A673 (cell line): ENCODE measurements at regions of chr1 and their contacts with region 1.

Region 1: GRCh38 chr1:172745014-172745413 is 86.1 kb downstream of the FASLG start:
- DNase-seq: peak; percentile 70
- H3K4me3 ChIP-seq: no peak overlapping the region
- H3K27ac ChIP-seq: no peak overlapping the region
- H3K4me1 ChIP-seq: no peaks in the 10 kb centered on the region
- H3K27me3 ChIP-seq: no peaks in the 10 kb centered on the region
- CTCF ChIP-seq: peak; percentile 71

Region 2: GRCh38 chr1:173202430-173203145 is 457.6 kb after region 1 on chr1:
- CTCF ChIA-PET with region 1: interaction called, 4 read pairs
- POLR2A ChIA-PET with region 1: no interaction called
- intact Hi-C with region 1: loop called (anchors 1 kb)
- DNase-seq: peak; percentile 69
- H3K4me3 ChIP-seq: no peak overlapping the region
- H3K27ac ChIP-seq: no peak overlapping the region
- H3K4me1 ChIP-seq: peaks cover 15% of the 10 kb centered on the region
- H3K27me3 ChIP-seq: no peaks in the 10 kb centered on the region
- CTCF ChIP-seq: peak; percentile 74

Region 3: GRCh38 chr1:173420330-173420806 is 675.4 kb after region 1 on chr1:
- CTCF ChIA-PET with region 1: no interaction called
- POLR2A ChIA-PET with region 1: no interaction called
- intact Hi-C with region 1: loop called (anchors 2 kb)
- DNase-seq: peak; percentile 85
- H3K4me3 ChIP-seq: no peak overlapping the region
- H3K27ac ChIP-seq: no peak overlapping the region
- H3K4me1 ChIP-seq: no peaks in the 10 kb centered on the region
- H3K27me3 ChIP-seq: no peaks in the 10 kb centered on the region
- CTCF ChIP-seq: peak; percentile 90

Region 4: DNA sequence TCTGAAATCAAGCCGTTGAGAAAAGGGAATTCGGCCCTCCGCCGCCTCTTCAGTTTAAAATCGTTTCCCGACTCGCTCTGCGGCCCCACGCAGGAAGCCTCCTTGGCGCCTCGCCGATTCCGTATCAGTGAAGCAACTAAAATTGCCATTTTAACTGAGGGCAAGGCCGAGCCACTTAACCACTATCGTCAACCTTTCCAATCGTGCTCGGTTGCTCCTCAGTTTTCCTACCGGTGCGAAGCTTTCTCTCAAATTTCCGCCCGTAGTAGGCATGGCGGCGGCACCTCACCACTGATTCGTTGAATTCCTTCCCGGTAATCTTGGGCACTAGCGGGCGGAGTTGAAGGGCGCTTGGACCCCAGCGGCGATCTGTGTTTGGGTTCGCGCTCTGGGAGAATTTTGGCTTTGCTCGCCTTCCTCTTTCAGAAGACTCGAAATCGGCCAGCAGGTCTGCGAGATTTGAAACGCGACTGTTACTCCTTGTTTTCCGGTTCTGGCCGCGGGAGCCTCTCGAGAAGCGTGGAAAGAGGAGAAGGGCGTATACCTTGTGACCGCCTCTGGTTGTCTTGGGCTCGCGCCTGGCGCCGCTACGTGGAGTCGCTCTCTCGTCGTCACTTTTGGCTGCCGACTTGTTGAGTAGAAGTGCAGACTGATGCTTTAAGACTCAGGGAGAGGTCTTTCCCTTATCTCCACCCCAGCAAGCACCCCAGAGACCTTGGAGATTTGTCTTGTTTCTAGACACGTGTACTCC is 1079.5 kb after region 1 on chr1 and contains the starts of genes CENPL and DARS2:
- CTCF ChIA-PET with region 1: no interaction called
- POLR2A ChIA-PET with region 1: no interaction called
- intact Hi-C with region 1: loop called (anchors 10 kb)
- DNase-seq: peak; percentile 99
- H3K4me3 ChIP-seq: peak within 1 kb of the TSS; percentile 73
- H3K27ac ChIP-seq: peak within 1 kb of the TSS; percentile 94
- H3K4me1 ChIP-seq: peaks cover 13% of the 10 kb centered on the region
- H3K27me3 ChIP-seq: no peaks in the 10 kb centered on the region
- CTCF ChIP-seq: no peak
- total RNA-seq, gene CENPL: 34.3 and 35.7 TPM in 2 replicates
- total RNA-seq, gene DARS2: 41.6 and 43.4 TPM in 2 replicates

Region 5: DNA sequence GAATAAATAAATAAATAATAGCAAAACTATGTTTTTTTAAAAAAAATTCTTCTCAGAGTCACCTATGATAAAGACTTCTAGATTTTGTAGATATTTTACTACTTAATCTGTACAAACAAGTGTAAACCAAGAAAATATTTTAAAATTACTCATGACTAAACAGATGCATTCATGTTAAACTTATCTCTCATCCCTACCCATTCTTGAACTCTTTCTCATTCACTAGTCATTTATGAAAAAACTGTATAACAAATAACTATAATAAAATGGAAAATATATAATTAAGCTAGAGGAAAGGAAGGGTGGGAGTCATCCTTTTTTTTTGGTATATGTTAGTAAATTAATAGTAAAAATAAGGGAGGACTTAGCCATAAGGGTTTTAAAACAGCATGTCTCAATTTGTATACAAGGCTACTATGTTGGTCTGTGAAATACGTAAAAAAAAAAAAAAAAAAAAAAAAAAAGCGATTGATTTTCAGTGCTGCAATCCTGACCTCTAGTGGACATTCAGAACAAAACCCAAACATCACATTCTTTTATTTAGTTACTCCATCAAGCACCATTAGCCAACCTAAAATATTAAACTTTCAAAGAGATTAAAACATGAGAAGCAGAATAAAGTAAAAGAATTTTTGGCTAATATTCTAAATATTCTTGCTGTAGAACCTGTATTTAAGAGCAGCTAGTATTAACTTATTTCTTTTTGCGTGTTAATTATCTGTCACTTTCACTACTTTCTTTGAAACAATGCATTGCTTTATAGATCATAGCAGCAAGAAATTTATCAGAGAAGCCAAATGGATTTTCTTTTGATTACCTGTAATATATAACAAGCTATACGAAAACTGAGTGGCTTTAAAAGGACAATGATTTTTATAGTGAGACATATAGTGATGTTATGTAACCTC is 1998.9 kb after region 1 on chr1:
- CTCF ChIA-PET with region 1: no interaction called
- POLR2A ChIA-PET with region 1: no interaction called
- intact Hi-C with region 1: loop called (anchors 5 kb)
- DNase-seq: peak; percentile 60
- H3K4me3 ChIP-seq: no peak overlapping the region
- H3K27ac ChIP-seq: no peak overlapping the region
- H3K4me1 ChIP-seq: no peaks in the 10 kb centered on the region
- H3K27me3 ChIP-seq: no peaks in the 10 kb centered on the region
- CTCF ChIP-seq: peak; percentile 74